ENCODE measurements at regions of chr1 and their contacts with region 1.

Region 1: DNA sequence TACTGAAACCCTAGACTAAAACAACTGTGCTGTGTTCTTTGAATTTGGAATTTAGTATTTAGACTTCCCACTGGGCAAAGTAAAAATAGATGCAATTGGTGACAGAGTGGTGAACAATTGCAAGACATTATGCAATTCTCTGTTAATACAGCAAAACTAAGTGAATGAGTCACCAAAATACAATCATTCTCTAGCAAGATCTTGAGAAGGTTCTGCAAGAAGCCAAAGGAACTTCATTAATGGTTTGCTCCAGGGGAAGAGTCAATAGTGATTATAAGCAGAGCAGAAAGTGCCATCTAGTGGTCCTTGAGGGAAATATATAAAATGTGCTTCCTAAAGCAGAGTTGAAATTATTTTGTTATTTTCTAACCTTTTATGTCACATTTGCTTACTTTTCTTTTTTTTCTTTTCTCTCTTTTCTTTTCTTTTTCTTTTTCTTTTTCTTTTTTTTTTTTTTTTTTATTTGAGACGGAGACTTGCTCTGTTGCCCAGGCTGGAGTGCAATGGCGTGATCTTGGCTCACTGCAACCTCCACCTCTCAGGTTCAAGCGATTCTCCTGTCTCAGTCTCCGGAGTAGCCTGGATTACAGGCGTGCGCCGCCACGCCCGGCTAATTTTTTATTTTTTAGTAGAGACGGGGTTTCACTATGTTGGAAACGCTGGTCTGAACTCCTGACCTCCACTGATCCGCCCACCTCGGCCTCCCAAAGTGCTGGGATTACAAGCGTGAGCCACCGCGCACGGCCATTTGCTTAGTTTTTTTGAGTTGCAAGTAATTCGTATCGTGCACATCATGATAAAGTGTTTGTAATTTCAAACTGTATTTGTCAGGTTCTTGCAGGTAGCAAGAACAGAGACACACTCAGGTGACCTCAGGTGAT is 99.2 kb downstream of the CTH start:
- DNase-seq: no peak
- H3K4me3 ChIP-seq: no peak overlapping the region
- CTCF ChIP-seq: peak in 1 of 3 donors; percentile 41
- POLR2A ChIP-seq: no peak

Region 2: GRCh38 chr1:70134148-70134547 is 376.1 kb before region 1 on chr1:
- intact Hi-C with region 1: loop called (anchors 10 kb)
- DNase-seq: no peak
- H3K4me3 ChIP-seq: no peak overlapping the region
- CTCF ChIP-seq: no peak
- POLR2A ChIP-seq: no peak

Region 3: GRCh38 chr1:70475023-70475422 is 35.2 kb before region 1 on chr1:
- intact Hi-C with region 1: no loop called
- DNase-seq: no peak
- H3K4me3 ChIP-seq: no peak overlapping the region
- CTCF ChIP-seq: no peak
- POLR2A ChIP-seq: no peak

Region 4: DNA sequence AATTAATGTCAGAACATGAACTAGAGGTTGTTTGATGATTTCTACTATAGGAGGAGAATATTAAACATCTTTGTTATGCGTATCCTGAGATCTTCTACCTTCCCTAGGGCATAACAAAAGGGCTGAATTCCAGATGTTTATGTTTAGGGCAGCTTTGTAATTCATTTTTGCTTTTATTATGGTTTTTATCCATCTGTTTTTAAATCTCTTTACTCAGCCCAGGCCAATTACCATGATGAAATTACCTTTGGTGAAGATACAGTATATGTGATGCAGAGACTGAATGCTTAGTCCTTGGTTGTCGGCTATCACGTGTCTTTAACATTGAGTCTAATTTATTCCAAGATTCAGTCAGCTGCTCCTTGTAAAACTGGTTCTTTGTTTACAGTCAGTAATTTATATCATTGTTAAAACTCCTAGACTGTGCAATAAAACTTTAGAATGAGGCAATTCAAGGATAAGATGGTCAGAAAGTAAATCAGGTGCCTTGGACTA is 77.7 kb after region 1 on chr1:
- intact Hi-C with region 1: no loop called
- DNase-seq: no peak
- H3K4me3 ChIP-seq: no peak overlapping the region
- CTCF ChIP-seq: no peak
- POLR2A ChIP-seq: no peak

Measured in lower leg skin (tissue), 4 donors.